ENCODE measurements at regions of chr7 and their contacts with region 1.

Region 1: GRCh38 chr7:132580717-132581285 is 4.5 kb upstream of the PLXNA4 start:
- DNase-seq: peak; percentile 89
- ATAC-seq: peak; percentile 78
- H3K4me3 Mint-ChIP-seq: no peak overlapping the region
- H3K27ac Mint-ChIP-seq: no peak overlapping the region
- H3K4me1 Mint-ChIP-seq: peaks cover 30% of the 10 kb centered on the region
- H3K27me3 Mint-ChIP-seq: peaks cover 38% of the 10 kb centered on the region

Region 2: GRCh38 chr7:132309102-132309805 is 271.5 kb before region 1 on chr7:
- CTCF ChIA-PET with region 1: interaction called, 12 read pairs
- POLR2A ChIA-PET with region 1: no interaction called
- DNase-seq: peak; percentile 73
- ATAC-seq: peak; percentile 86
- H3K4me3 Mint-ChIP-seq: no peak overlapping the region
- H3K27ac Mint-ChIP-seq: peak overlapping the region; percentile 17
- H3K4me1 Mint-ChIP-seq: peaks cover 39% of the 10 kb centered on the region
- H3K27me3 Mint-ChIP-seq: peaks cover 45% of the 10 kb centered on the region

Region 3: DNA sequence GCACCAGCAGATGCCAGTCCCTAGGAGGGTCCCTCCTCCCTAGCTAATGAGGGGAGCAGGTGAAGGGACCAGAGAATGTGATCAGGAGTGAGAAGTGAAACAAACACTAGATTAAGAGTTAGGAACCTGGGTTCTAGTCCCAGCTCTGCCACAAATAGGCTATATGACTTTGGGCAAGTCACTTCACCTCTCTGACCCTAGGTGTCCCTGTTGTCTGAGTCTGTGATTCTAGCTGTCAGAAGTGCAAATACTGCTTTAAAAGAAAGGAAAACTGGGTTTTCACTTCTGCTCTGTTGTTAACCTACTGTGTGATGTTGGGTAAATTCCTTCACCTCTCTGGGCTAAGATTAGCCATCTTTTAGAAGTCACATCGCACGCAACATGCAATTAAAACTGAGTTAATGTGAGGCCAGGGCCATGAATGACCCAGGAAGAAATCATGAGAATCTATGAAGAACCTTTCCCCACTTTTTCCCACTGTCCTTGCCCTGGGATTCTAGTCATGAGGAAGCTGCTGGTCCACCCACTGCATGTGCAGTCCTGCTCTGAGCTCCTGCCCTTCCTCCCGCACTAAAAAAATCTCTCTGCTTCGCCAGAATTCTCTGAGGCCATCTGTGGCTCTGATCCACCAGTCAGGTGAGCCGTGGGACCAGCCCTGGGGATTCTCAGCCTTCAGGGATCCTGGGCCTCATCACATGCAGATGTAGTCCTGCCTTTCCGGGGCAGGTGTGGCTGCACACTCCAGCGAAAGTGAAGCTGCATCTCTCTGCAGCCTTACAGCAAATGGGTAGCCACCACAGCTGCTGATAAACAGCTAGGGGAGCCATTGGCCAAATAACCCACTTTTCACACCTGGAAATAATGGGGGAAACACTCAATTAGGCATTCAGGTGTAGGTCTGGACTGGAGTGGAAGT is 186.3 kb before region 1 on chr7:
- CTCF ChIA-PET with region 1: interaction called, 312 read pairs
- POLR2A ChIA-PET with region 1: no interaction called
- DNase-seq: peak; percentile 65
- ATAC-seq: peak; percentile 85
- H3K4me3 Mint-ChIP-seq: no peak overlapping the region
- H3K27ac Mint-ChIP-seq: peak overlapping the region; percentile 78
- H3K4me1 Mint-ChIP-seq: peaks cover 39% of the 10 kb centered on the region
- H3K27me3 Mint-ChIP-seq: peaks cover 10% of the 10 kb centered on the region

Region 4: GRCh38 chr7:132475669-132476116 is 105.1 kb before region 1 on chr7:
- CTCF ChIA-PET with region 1: interaction called, 11 read pairs
- POLR2A ChIA-PET with region 1: no interaction called
- DNase-seq: no peak
- ATAC-seq: no peak
- H3K4me3 Mint-ChIP-seq: no peak overlapping the region
- H3K27ac Mint-ChIP-seq: no peak overlapping the region
- H3K4me1 Mint-ChIP-seq: peaks cover 67% of the 10 kb centered on the region
- H3K27me3 Mint-ChIP-seq: peaks cover 13% of the 10 kb centered on the region

Region 5: DNA sequence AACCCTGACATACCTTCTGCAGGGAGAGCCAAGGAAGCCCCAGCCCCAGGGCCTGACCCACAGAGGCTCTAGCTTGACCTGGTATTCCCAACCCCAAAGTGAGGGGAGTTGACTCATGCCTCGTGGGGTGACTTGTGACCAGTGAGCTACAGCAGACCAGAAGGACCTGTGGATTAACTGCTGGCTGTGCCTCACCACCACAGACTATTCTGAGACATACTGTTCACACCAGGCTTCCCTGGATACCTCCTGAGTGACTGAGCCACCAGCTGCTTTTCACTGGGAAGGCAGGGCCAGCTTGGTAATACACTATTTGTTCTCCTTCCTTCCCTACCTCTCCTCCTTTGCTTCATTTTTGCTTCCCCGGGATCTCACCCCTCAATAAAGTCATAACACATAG is 11.8 kb before region 1 on chr7:
- CTCF ChIA-PET with region 1: interaction called, 11 read pairs
- POLR2A ChIA-PET with region 1: no interaction called
- DNase-seq: no peak
- ATAC-seq: no peak
- H3K4me3 Mint-ChIP-seq: no peak overlapping the region
- H3K27ac Mint-ChIP-seq: no peak overlapping the region
- H3K4me1 Mint-ChIP-seq: peaks cover 37% of the 10 kb centered on the region
- H3K27me3 Mint-ChIP-seq: peaks cover 74% of the 10 kb centered on the region

Measured in activated CD8-positive, alpha-beta T cell treated with anti-CD3 and anti-CD28 coated beads, Interleukin-2, amount 10 ng/mL, durations not matched to agents 7 days and 5 days (primary cell).